Activated CD4-positive, alpha-beta T cell treated with anti-CD3 and anti-CD28 coated beads, Interleukin-2, amount 10 ng/mL, durations not matched to agents 24 days and 14 days (primary cell): ENCODE measurements at regions of chr3 and their contacts with region 1.

Region 1: GRCh38 chr3:45105855-45106671 is 40.1 kb downstream of the CDCP1 start:
- DNase-seq: peak; percentile 95
- H3K4me3 Mint-ChIP-seq: peak overlapping the region; percentile 62
- H3K27ac Mint-ChIP-seq: peak overlapping the region; percentile 89
- H3K4me1 Mint-ChIP-seq: peaks cover 70% of the 10 kb centered on the region
- H3K27me3 Mint-ChIP-seq: peaks cover 10% of the 10 kb centered on the region

Region 2: DNA sequence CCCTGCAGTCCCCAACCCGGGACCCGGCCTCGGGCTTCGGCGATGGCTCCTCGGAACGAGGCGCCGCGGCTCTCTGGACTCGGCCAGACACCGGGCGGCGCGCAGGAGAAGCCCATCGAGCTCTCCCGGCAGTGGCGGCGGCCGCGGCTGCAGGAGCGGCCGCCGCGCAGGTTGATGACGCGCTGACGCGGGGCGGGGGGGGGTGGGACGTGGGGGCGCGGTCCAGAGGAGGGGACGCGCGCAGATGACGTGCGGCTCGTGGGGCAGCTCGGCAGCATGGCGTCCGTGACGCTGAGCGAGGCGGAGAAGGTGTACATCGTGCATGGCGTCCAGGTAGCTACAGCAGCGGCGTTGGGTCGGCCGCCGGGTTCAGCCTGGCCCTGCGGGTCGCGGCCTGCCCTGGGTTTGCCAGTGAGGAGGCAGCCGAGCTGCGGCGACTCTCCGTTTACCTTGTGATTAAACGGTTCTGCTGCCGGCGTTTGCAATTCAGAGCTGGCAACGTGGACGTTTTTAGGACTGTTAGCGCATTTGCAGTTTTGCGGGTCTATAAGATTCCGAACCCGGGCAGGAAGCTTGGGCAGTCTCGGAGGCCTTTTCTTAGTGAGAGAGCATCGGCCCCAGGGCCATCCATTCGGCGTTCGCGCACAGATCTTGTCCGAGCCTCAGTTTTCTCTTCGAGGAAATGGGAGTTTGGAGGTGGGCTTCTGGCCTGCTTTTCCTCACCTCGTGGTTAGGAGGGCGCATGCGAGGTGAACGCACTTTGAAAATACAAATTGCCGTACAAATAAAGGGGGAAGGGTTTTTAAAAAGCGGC is 129.9 kb before region 1 on chr3 and contains the starts of genes EXOSC7 and ZDHHC3:
- intact Hi-C with region 1: no loop called
- DNase-seq: peak; percentile 95
- H3K4me3 Mint-ChIP-seq: peak within 1 kb of the TSS; percentile 98
- H3K27ac Mint-ChIP-seq: peak within 1 kb of the TSS; percentile 98
- H3K4me1 Mint-ChIP-seq: peaks cover 50% of the 10 kb centered on the region
- H3K27me3 Mint-ChIP-seq: no peaks in the 10 kb centered on the region
- total RNA-seq, gene EXOSC7: 95.5 and 97.9 TPM in 2 replicates
- total RNA-seq, gene ZDHHC3: 42.0 and 46.2 TPM in 2 replicates

Region 3: GRCh38 chr3:45064512-45065372 is 41.3 kb before region 1 on chr3:
- intact Hi-C with region 1: loop called (anchors 2 kb)
- DNase-seq: peak; percentile 90
- H3K4me3 Mint-ChIP-seq: peak overlapping the region; percentile 57
- H3K27ac Mint-ChIP-seq: peak overlapping the region; percentile 87
- H3K4me1 Mint-ChIP-seq: peaks cover 33% of the 10 kb centered on the region
- H3K27me3 Mint-ChIP-seq: peaks cover 9% of the 10 kb centered on the region

Region 4: DNA sequence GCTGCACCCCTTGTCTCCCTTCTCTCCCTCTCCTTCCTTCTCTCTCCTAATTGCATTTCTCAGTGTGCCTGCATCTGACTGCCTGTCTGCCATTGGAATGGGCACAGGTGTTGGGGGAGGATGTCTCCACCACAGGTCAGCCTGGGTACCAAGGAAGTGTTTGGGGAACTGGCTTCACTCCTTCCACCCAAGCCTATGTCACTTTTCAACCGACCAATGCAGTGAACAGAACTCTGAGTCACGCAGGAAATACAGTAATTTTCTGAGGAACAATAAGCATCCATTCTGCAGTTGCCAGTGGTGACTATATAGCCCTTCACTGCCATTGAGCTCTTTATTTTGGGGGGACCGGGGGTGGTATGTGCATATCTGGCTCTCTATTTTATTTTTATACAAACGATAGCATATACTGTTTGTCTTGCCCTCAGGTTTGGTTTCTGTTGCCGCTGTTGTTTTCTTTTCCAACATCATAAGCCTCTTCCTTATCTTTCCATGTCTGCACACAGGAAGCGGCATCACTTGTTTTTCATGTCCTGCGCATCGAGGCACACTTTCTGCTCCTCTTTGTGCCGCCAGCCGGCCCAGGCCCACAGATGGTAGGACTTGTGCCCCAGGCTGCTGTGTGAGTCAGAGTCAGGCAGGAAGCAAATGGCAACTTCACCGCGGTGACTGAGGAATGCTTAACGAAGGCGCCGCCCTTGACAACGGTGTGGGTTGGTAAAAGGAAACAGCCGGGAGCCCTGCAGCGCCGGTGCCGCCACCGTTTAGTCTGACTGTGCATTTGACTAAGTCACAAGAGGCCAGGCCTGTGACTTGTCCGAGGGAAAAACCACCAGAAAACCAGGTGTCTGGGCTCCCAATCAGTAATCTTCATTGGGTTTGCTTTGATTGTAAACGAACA is 61.2 kb after region 1 on chr3:
- intact Hi-C with region 1: loop called (anchors 1 kb)
- DNase-seq: peak; percentile 95
- H3K4me3 Mint-ChIP-seq: peak overlapping the region; percentile 76
- H3K27ac Mint-ChIP-seq: peak overlapping the region; percentile 96
- H3K4me1 Mint-ChIP-seq: peaks cover 41% of the 10 kb centered on the region
- H3K27me3 Mint-ChIP-seq: peaks cover 6% of the 10 kb centered on the region

Region 5: GRCh38 chr3:45656575-45657363 is 550.7 kb after region 1 on chr3:
- intact Hi-C with region 1: loop called (anchors 10 kb)
- DNase-seq: peak; percentile 94
- H3K4me3 Mint-ChIP-seq: no peak overlapping the region
- H3K27ac Mint-ChIP-seq: no peak overlapping the region
- H3K4me1 Mint-ChIP-seq: peaks cover 13% of the 10 kb centered on the region
- H3K27me3 Mint-ChIP-seq: no peaks in the 10 kb centered on the region

Region 6: DNA sequence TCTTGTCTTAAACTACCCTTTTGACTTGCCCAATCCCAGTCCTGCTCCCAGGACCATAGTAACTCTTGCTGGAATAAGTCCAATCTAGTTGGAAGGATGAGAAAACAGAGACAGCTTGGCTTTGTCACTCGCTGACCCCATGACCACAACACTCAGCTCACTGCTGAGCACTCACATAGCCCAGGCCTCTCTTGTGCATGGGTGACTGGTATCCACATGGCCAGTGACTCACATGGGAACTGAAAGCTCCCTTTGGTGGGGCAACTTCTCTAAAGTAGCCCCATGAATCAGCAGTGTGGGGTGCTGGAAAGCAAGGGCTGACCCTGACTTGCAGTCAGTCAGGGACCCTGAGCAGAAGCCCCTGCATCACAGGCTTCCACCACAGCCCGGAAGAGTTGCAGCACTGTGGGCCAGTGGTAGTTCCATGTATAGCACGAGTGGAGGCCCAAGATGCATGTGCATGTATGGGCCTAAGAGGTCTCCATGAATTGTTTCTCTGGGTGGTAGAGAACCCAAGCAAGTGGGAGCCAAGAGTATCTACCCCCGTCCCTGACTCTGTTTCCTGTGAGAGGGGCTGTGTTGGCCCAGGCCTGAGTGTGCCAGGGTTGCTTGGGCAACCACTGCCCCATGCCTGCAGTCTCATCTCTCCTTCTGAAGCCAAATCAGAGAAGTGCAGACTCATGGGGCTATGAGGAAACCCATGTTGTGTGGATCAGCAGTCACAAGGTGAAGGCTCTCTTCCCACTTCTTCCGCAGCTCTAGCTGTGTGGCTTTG is 983.4 kb after region 1 on chr3:
- intact Hi-C with region 1: loop called (anchors 10 kb)
- DNase-seq: no peak
- H3K4me3 Mint-ChIP-seq: no peak overlapping the region
- H3K27ac Mint-ChIP-seq: peak overlapping the region; percentile 18
- H3K4me1 Mint-ChIP-seq: peaks cover 53% of the 10 kb centered on the region
- H3K27me3 Mint-ChIP-seq: peaks cover 13% of the 10 kb centered on the region